ENCODE measurements at regions of chr19 and their contacts with region 1.

Region 1: GRCh38 chr19:16627193-16627927 is 644 bp downstream of the MED26 start:
- DNase-seq: peak; percentile 68
- ATAC-seq: no peak

Region 2: GRCh38 chr19:16542045-16542909 is 85.1 kb before region 1 on chr19 and contains the start of gene CHERP:
- intact Hi-C with region 1: no loop called
- DNase-seq: peak; percentile 96
- ATAC-seq: peak; percentile 98
- total RNA-seq, gene CHERP: 36.9 TPM

Region 3: DNA sequence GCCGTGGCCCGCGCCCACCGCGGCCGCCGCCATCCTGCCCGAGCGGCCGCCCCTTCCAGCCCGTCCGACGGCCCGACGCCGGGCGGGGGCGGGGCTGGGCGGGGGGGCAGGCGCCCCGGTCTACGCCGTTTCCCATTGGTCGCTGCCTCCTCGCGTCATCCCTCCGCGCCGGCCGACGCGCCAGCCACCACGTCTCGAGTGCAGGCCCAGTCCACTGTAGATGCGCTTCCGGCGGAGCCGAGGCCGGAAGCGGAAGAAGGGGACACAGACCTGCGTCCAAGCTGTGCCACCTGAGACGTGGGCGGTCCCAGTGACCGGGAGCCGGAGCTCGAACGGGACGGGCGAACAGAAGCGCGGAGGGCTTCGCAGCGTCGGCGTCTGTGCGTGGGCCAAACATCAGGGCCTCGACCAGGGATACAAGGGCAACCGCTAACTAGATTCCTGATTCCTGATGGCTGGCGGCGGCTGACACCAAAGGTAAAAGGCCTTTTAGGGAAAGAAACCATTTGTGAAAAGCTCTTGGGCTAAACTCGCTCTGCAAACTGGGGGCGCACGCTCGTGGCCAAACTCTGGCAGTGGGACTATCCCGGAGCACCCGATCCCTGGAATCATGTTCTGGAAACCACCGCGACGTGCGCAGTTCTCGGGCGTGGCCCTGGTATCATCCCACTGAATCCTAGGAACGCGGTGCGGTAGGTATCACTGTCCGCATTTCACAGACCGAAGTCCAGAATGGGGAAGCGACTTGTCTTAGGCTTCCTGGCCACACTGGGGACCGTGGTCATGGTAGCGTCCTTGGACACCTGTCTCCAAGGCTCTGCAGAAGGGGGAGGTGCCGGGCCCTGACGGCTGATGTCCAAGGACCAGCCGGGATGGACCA is 54.8 kb before region 1 on chr19 and contains the start of gene SLC35E1:
- intact Hi-C with region 1: loop called (anchors 2 kb)
- DNase-seq: peak; percentile 96
- ATAC-seq: peak; percentile 99
- total RNA-seq, gene SLC35E1: 33.2 TPM

Measured in sciatic nerve (tissue), 2 donors.